ENCODE measurements at regions of chr17 and their contacts with region 1.

Region 1: DNA sequence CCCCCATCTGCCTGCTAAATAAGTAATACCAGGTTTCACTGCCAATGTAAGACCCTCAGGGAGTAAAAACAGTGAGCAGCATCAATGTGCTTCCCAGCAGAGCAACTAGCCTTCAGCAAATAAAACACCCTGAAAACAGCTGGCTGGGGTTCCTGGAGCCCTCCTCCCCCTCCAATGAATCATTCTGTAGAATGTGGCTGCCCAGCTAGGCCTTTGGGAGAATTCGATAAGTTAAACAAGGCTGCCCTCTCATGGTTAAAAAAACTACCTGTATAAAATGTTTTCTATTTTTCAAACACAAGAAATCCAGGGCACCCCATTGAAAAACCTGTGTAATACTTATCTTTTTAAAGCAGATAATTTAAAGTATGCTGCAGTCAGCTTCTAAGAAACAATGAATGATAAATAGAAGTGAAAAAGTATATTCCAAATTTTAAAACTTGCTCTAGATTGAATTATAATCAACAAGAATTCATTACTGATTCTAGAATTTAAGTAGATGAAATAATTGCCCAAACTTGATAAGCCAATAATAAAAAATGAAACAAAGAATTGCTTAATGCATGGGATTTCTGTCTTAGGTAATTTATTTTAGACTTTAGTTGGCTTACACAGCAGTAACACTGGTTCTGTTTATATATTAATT is 9.4 kb upstream of the TOM1L1 start:
- DNase-seq: peak; percentile 45 to 56
- H3K4me3 ChIP-seq: no peak overlapping the region
- H3K27ac ChIP-seq: no peak overlapping the region
- H3K4me1 ChIP-seq: no peaks in the 10 kb centered on the region
- H3K27me3 ChIP-seq: no peaks in the 10 kb centered on the region
- CTCF ChIP-seq: peak in 5 of 6 experiments; percentile 13 to 67 (median 47)
- POLR2A ChIP-seq: no peak

Region 2: GRCh38 chr17:53032861-53033271 is 1858.4 kb before region 1 on chr17:
- intact Hi-C with region 1: loop called (anchors 10 kb)
- DNase-seq: peak; percentile 71 to 76
- H3K4me3 ChIP-seq: no peak overlapping the region
- H3K27ac ChIP-seq: no peak overlapping the region
- H3K4me1 ChIP-seq: no peaks in the 10 kb centered on the region
- H3K27me3 ChIP-seq: no peaks in the 10 kb centered on the region
- CTCF ChIP-seq: peak; percentile 33 to 98 (median 79)
- POLR2A ChIP-seq: no peak